Mammary epithelial cell (primary cell): ENCODE measurements at regions of chr6 and their contacts with region 1.

Region 1: DNA sequence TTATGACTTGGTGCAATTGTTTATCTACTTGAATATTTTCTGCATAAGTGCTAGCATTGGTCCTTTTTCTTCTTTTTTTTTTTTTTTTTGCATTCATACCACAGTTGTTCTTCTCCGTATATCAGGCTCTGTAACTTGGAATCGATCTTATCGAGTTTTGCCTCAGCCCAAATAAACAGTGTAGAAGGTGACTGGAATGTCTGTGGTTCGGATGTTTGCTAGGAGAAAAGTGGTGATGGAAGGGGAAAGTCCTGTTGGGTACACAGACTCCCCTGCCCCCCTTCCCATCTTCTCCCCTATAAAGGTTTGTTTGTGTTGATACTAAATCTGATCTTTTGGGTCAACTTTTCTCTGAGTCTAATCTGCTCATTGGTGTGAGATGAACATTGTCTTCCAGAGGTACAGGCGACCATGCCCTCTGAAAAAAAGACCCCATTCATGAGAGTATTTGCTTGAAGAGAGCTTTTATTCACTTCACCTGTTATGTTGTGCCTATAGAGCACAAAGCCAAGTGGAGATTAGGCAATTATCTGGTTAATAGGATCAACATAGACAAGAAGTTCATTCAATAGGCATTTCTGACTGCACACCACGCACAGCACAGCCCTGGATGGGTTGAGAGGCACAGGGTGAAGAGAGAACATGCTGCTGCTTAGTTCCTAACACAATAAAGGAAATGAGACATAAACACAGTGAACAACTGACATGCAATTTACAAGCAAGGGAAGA is 620.0 kb downstream of the PKHD1 start:
- DNase-seq: no peak
- H3K4me3 ChIP-seq: no peak overlapping the region
- H3K27ac ChIP-seq: no peak overlapping the region
- H3K4me1 ChIP-seq: peaks cover 3% of the 10 kb centered on the region
- H3K27me3 ChIP-seq: no peaks in the 10 kb centered on the region
- CTCF ChIP-seq: no peak

Region 2: GRCh38 chr6:51387907-51388306 is 79.5 kb before region 1 on chr6:
- CTCF ChIA-PET with region 1: no interaction called
- dilution Hi-C with region 1: loop called (anchors 5 kb)
- in situ Hi-C with region 1: no loop called
- intact Hi-C with region 1: no loop called
- DNase-seq: no peak
- H3K4me3 ChIP-seq: no peak overlapping the region
- H3K27ac ChIP-seq: no peak overlapping the region
- H3K4me1 ChIP-seq: no peaks in the 10 kb centered on the region
- H3K27me3 ChIP-seq: peaks cover 1% of the 10 kb centered on the region
- CTCF ChIP-seq: no peak

Region 3: GRCh38 chr6:51494342-51494741 is 27.0 kb after region 1 on chr6:
- CTCF ChIA-PET with region 1: no interaction called
- dilution Hi-C with region 1: no loop called
- in situ Hi-C with region 1: no loop called
- intact Hi-C with region 1: no loop called
- DNase-seq: no peak
- H3K4me3 ChIP-seq: no peak overlapping the region
- H3K27ac ChIP-seq: no peak overlapping the region
- H3K4me1 ChIP-seq: no peaks in the 10 kb centered on the region
- H3K27me3 ChIP-seq: no peaks in the 10 kb centered on the region
- CTCF ChIP-seq: peak in 1 of 2 donors; percentile 33